ENCODE measurements at regions of chr1 and their contacts with region 1.

Region 1: DNA sequence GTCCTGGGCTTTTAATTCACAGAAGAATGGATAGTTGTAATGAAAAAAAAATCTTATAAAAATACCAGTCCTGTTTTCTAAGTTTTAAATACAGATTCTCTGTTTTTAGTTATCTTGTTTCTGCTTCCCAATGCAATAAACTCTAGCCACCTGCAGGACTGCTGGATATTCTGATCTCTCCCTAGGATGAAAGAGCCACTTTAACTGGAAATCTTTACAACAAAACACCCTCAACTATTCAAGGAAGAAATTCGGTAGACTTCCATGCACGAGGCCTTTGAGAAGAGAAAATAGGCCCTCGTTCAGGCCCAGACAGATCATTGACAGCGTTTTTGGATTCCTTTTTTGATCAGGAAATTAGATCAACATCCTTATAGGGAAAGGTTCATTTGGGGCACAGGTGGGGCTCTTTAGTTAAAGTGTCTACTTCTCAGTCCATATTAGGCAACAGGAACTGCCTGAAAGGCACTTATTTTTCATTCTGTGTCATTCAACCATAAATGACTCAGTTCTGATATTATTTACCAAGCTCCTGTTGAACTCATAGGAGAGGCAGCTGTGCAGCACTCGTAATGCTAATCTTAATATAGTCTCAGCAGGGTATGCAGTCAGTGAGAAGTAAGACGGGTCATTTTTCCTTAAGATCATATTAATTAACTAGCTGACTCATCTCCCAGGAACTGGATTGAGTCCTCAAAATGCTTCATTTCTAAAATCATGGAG is 71.1 kb upstream of the ERRFI1 start:
- DNase-seq: peak; percentile 53
- H3K4me3 Mint-ChIP-seq: no peak overlapping the region
- H3K27ac Mint-ChIP-seq: peak overlapping the region; percentile 81
- H3K4me1 Mint-ChIP-seq: peaks cover 36% of the 10 kb centered on the region
- H3K27me3 Mint-ChIP-seq: peaks cover 17% of the 10 kb centered on the region

Region 2: GRCh38 chr1:7948960-7949359 is 148.3 kb before region 1 on chr1:
- CTCF ChIA-PET with region 1: no interaction called
- intact Hi-C with region 1: loop called (anchors 2 kb)
- DNase-seq: peak; percentile 57
- H3K4me3 Mint-ChIP-seq: peak overlapping the region; percentile 15
- H3K27ac Mint-ChIP-seq: peak overlapping the region; percentile 68
- H3K4me1 Mint-ChIP-seq: peaks cover 26% of the 10 kb centered on the region
- H3K27me3 Mint-ChIP-seq: no peaks in the 10 kb centered on the region

Region 3: GRCh38 chr1:8154621-8155052 is 57.4 kb after region 1 on chr1:
- CTCF ChIA-PET with region 1: no interaction called
- intact Hi-C with region 1: loop called (anchors 1 kb)
- DNase-seq: no peak
- H3K4me3 Mint-ChIP-seq: no peak overlapping the region
- H3K27ac Mint-ChIP-seq: no peak overlapping the region
- H3K4me1 Mint-ChIP-seq: peaks cover 42% of the 10 kb centered on the region
- H3K27me3 Mint-ChIP-seq: peaks cover 7% of the 10 kb centered on the region

Region 4: DNA sequence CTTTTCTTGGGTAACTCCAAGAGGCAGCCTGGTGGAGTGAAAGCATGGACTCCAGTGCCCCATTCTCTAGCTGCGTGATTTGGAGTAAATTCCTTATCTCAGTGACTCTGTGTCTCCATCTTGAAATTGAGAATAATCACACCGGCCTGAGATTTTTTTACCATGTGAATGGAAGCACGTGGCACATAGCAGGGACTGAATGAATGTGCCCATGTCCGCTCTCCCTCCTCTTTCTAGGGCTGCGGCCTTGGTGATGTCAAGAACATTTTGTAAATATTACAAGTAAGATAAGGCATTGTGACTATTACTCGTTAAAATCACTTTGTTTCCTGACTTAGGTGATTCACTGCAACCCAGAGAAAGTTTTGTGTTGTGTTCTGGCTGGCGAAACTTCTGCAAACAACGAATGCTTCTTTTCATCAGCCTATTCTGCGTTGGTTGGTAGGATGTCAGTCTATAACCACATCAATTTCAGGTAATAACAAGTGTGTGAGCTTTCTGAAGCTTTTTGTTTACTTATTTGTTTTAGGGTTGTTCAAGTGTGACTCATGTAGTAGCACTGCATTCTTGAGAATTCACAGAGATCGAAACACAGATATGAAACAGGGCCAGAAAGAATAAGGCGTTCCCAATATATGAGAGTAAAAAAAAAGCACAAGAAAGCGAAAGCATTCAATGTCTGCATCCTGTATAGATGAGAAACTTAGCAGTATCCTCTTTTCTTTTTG is 85.0 kb after region 1 on chr1:
- CTCF ChIA-PET with region 1: no interaction called
- intact Hi-C with region 1: loop called (anchors 1 kb)
- DNase-seq: no peak
- H3K4me3 Mint-ChIP-seq: no peak overlapping the region
- H3K27ac Mint-ChIP-seq: peak overlapping the region; percentile 70
- H3K4me1 Mint-ChIP-seq: peaks cover 17% of the 10 kb centered on the region
- H3K27me3 Mint-ChIP-seq: no peaks in the 10 kb centered on the region

Region 5: DNA sequence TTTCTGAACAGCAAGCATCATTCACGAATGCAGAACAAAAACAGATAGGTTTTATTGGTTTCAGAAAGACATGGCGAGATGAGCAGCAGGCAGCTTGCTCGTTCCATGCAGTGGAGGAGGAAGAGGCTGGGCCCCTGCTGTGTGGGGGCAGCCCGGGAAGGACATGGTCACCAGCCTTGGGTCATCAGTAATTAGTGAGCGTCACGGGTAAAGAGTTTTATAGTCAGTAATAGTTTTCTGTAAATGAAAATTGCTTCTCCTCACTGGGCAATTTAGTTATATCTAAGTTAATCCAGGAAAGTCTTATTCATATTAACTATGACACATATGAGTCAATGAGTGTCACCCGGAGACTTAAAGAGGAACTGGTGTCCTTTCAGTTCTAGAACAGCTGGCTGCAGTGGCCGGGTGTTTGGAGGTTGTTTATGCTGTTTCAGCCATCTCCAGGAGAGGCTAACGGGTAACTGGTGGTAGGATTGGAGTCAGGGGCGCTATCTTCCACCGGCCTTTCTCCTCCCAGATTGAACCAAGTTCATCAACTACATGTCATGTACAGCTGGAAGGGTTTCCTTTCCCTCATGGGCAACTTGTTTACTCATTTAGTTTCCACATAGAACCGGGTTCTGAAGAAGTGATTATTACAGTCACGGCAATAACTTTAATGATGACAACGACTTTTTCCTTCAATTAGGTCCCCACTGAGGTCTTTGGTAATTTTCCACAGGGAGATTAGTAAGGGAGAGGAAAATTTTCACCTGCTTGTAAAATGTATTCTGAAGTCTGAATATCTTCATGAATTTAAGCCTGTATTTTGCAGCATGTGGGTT is 186.0 kb after region 1 on chr1:
- CTCF ChIA-PET with region 1: no interaction called
- intact Hi-C with region 1: loop called (anchors 5 kb)
- DNase-seq: peak; percentile 36
- H3K4me3 Mint-ChIP-seq: no peak overlapping the region
- H3K27ac Mint-ChIP-seq: no peak overlapping the region
- H3K4me1 Mint-ChIP-seq: peaks cover 8% of the 10 kb centered on the region
- H3K27me3 Mint-ChIP-seq: peaks cover 29% of the 10 kb centered on the region